MCF 10A (cell line): ENCODE measurements at regions of chr5 and their contacts with region 1.

Region 1: DNA sequence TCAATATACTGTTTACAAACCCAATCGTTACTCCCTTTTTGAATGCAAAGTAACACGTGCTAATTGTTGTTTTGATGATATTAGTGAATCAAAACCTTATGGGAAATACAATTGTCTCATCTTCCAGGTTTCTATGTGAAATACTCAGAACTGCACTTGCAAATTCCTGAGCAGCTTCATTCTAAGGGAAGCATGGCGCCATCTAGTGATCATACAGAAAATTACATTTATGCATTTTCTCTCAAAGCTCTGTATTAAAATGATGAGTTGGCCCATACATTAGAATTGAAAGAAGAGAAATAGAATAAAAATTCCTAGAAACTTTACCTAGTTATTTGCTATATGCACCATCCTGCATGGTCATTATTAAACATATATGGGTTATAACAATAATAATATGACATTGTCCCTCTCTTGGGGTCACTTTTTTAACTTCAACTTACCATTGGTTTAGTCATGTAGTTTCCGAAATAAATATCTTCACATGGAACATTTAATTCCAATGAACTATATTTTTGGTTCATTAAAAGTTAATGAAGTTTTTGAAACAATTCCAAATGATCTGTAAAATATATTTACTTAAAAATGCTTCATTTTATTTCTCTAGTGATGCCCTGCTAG is 220.0 kb downstream of the PDE4D start:
- DNase-seq: peak; percentile 59
- H3K4me3 Mint-ChIP-seq: no peak overlapping the region
- H3K27ac Mint-ChIP-seq: no peak overlapping the region
- H3K4me1 Mint-ChIP-seq: peaks cover 6% of the 10 kb centered on the region
- H3K27me3 Mint-ChIP-seq: no peaks in the 10 kb centered on the region
- CTCF ChIP-seq: peak; percentile 65

Region 2: GRCh38 chr5:59652449-59652848 is 21.1 kb before region 1 on chr5:
- CTCF ChIA-PET with region 1: no interaction called
- POLR2A ChIA-PET with region 1: no interaction called
- intact Hi-C with region 1: no loop called
- DNase-seq: no peak
- H3K4me3 Mint-ChIP-seq: no peak overlapping the region
- H3K27ac Mint-ChIP-seq: no peak overlapping the region
- H3K4me1 Mint-ChIP-seq: peaks cover 6% of the 10 kb centered on the region
- H3K27me3 Mint-ChIP-seq: no peaks in the 10 kb centered on the region
- CTCF ChIP-seq: no peak

Region 3: GRCh38 chr5:59724482-59725391 is 51.2 kb after region 1 on chr5:
- CTCF ChIA-PET with region 1: interaction called, 6 read pairs
- POLR2A ChIA-PET with region 1: no interaction called
- intact Hi-C with region 1: loop called (anchors 5 kb)
- DNase-seq: peak; percentile 80
- H3K4me3 Mint-ChIP-seq: no peak overlapping the region
- H3K27ac Mint-ChIP-seq: no peak overlapping the region
- H3K4me1 Mint-ChIP-seq: peaks cover 26% of the 10 kb centered on the region
- H3K27me3 Mint-ChIP-seq: no peaks in the 10 kb centered on the region
- CTCF ChIP-seq: peak; percentile 76

Region 4: DNA sequence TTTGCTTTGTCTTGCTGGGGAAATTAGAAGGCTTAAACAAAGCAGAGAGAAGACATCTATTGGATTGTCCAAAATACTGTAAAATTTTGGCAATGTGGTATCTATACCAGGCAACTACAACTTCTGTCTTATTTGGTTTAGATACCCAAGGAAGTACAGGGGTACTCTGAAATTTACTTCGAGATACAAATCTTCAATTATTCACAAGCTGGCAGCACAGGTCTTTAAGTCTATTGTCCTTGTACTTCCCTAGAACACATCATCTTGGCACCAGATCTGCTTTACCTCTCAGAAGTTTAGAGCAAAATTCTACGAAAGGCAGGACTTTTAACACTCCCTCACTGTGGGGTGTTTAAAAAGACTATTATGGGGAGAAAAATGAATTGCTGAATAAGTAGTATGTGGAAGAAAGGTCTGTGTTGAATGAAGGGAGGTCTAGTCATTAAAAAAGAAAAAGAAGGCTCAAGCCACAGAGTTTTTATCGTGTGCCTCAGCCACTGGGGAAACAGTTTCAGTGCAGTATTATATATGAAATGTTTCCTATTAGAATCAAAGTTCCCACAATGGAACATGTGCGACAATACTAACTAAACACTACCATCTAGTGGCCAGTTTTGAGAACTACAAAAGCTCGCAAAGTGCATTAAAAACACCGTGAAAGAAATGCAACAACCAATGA is 126.3 kb after region 1 on chr5:
- CTCF ChIA-PET with region 1: interaction called, 7 read pairs
- POLR2A ChIA-PET with region 1: interaction called, 3 read pairs
- intact Hi-C with region 1: loop called (anchors 1 kb)
- DNase-seq: peak; percentile 77
- H3K4me3 Mint-ChIP-seq: no peak overlapping the region
- H3K27ac Mint-ChIP-seq: no peak overlapping the region
- H3K4me1 Mint-ChIP-seq: no peaks in the 10 kb centered on the region
- H3K27me3 Mint-ChIP-seq: no peaks in the 10 kb centered on the region
- CTCF ChIP-seq: peak; percentile 67